ENCODE measurements at regions of chr10 and their contacts with region 1.

Region 1: DNA sequence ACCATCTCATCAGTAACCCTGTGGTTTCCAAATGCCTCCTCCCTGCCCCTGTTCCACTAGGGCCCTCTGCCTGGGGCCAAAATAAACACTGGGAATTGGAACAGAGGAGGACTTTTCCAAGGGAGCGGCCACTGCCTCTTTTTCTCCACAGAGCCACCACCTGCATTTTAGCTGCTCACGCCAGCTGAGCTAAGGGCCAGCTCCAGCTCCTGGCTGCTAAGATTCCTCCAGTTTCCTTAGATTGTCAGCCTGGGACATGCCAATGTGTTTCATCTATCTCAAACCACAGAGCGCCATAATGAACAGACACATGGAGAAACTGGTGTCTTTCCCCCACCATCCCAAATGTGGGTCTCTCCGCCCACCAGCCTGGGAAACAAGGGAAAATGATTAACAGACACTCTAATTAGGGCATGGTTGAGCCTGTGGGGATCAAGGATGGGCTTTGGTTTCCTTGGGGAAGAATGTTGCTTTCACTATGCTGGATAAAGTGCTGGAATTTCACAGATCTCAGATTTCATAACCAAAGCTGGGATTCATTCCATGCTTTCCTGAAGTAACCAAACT is 52.2 kb downstream of the ASB13 start:
- DNase-seq: no peak
- H3K4me3 ChIP-seq: no peak overlapping the region
- H3K27me3 ChIP-seq: no peaks in the 10 kb centered on the region
- CTCF ChIP-seq: no peak

Region 2: GRCh38 chr10:5446390-5446926 is 167.8 kb before region 1 on chr10:
- CTCF ChIA-PET with region 1: interaction called, 17 read pairs
- POLR2A ChIA-PET with region 1: interaction called, 5 read pairs
- DNase-seq: peak; percentile 66
- H3K4me3 ChIP-seq: peak overlapping the region; percentile 69
- H3K27me3 ChIP-seq: no peaks in the 10 kb centered on the region
- CTCF ChIP-seq: no peak

Region 3: DNA sequence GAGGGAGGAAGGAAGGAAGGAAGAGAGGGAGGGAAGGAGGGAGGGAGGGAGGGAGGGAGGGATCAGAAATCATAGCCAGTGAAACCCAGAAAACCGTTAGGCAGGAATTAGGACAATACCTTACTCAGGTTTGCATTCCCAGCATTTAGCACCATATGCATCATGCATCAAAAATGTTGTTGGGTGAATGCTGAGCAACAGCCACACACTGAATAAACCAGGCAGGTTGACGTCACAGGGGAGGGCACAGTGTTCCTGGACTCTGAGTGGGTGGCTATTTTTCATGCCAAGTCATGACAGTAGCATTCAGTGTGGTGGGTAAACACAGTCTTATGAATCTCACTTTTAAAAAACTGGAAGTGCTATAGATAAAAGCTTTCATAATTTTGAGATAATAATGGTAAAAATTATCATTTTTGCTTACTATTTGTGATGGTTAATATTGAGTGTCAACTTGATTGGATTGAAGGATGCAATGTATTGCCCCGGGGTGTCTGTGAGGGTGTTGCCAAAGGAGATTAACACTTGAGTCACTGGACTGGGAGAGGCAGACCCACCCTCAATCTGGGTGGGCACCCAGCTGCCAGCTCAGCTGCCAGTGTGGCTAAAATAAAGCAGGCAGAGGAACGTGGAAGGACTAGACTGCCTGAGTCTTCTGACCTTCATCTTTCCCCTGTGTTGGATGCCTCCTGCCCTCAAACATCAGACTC is 1164.9 kb after region 1 on chr10:
- CTCF ChIA-PET with region 1: no interaction called
- POLR2A ChIA-PET with region 1: interaction called, 10 read pairs
- DNase-seq: peak; percentile 82
- H3K4me3 ChIP-seq: no peak overlapping the region
- H3K27me3 ChIP-seq: no peaks in the 10 kb centered on the region
- CTCF ChIP-seq: no peak

Measured in BJ (cell line).